ENCODE measurements at regions of chr10 and their contacts with region 1.

Region 1: GRCh38 chr10:32171204-32171603 is 115.0 kb upstream of the KIF5B start:
- DNase-seq: no peak
- ATAC-seq: no peak
- H3K4me3 ChIP-seq: no peak overlapping the region
- H3K27ac ChIP-seq: no peak overlapping the region
- H3K4me1 ChIP-seq: no peaks in the 10 kb centered on the region
- H3K27me3 ChIP-seq: peaks cover 7% of the 10 kb centered on the region
- CTCF ChIP-seq: no peak
- POLR2A ChIP-seq: no peak
- RAD21 ChIP-seq: no peak

Region 2: DNA sequence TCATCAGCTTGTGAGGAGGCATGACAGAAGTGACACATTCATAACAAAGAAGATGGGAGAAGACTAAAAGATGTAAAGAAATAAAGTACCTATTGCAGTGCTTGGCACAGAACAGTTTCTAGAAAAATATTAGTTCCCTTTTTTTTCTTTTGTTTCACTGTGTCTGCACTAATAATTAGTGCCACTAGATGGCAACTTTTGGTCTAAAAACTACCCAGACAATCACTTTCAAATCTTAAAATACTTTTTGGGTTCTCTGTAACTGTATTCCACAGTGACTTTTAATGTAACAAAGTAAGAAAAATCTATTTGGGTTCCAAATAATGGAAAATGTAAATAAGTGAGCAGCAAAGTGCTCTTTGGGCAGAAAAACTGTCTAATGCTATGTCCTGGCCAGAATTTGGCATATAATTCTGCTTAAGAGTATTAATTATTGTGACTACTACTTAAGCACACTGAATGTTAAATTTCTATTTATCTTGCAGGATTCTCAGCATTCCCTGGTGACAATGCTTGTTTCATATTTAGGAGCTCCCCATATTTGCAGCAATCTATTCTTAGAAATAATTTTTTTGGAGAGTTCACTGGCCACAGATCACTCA is 19.8 kb after region 1 on chr10:
- CTCF ChIA-PET with region 1: interaction called, 4 read pairs
- POLR2A ChIA-PET with region 1: interaction called, 12 read pairs
- dilution Hi-C with region 1: no loop called
- in situ Hi-C with region 1: no loop called
- intact Hi-C with region 1: no loop called
- DNase-seq: peak; percentile 36
- ATAC-seq: peak; percentile 81
- H3K4me3 ChIP-seq: no peak overlapping the region
- H3K27ac ChIP-seq: no peak overlapping the region
- H3K4me1 ChIP-seq: no peaks in the 10 kb centered on the region
- H3K27me3 ChIP-seq: peaks cover 7% of the 10 kb centered on the region
- CTCF ChIP-seq: peak; percentile 77
- POLR2A ChIP-seq: no peak
- RAD21 ChIP-seq: peak; percentile 61

Measured in IMR-90 (cell line).